WTC11 (cell line): ENCODE measurements at regions of chr3 and their contacts with region 1.

Region 1: GRCh38 chr3:111967651-111968274 is 11.1 kb upstream of the ABHD10 start:
- DNase-seq: peak; percentile 87
- ATAC-seq: peak; percentile 90
- H3K4me3 Mint-ChIP-seq: no peak overlapping the region
- H3K27ac Mint-ChIP-seq: no peak overlapping the region
- H3K4me1 Mint-ChIP-seq: peaks cover 9% of the 10 kb centered on the region
- H3K27me3 Mint-ChIP-seq: no peaks in the 10 kb centered on the region
- CTCF ChIP-seq: peak; percentile 87

Region 2: GRCh38 chr3:111691293-111691909 is 276.4 kb before region 1 on chr3:
- CTCF ChIA-PET with region 1: no interaction called
- POLR2A ChIA-PET with region 1: interaction called, 10 read pairs
- DNase-seq: no peak
- ATAC-seq: peak; percentile 82
- H3K4me3 Mint-ChIP-seq: no peak overlapping the region
- H3K27ac Mint-ChIP-seq: no peak overlapping the region
- H3K4me1 Mint-ChIP-seq: peaks cover 10% of the 10 kb centered on the region; the same call in 1 of the 2 replicates
- H3K27me3 Mint-ChIP-seq: no peaks in the 10 kb centered on the region
- CTCF ChIP-seq: no peak

Region 3: GRCh38 chr3:111717601-111718000 is 250.2 kb before region 1 on chr3:
- CTCF ChIA-PET with region 1: interaction called, 24 read pairs
- POLR2A ChIA-PET with region 1: no interaction called
- DNase-seq: peak; percentile 71
- ATAC-seq: peak; percentile 96
- H3K4me3 Mint-ChIP-seq: no peak overlapping the region
- H3K27ac Mint-ChIP-seq: no peak overlapping the region
- H3K4me1 Mint-ChIP-seq: peaks cover 8% of the 10 kb centered on the region
- H3K27me3 Mint-ChIP-seq: no peaks in the 10 kb centered on the region
- CTCF ChIP-seq: peak; percentile 93

Region 4: DNA sequence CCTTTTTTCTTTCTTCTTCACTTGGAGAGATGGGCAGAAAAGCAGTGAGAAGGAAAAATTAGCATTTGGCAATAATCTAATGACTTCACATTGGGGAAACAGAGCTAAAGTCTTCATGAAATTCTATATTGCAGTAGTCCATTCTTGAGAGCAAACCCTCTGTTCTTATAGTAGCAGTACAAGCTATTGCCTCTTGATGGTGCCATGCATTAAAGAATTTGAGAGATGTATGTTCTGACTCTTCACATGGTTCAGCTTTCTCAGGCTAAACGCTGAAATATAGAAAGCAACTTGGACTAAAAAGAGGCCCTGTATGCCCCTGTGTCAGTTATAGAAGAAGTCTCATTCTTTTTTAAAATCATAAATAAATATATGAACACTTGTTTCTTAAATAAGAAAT is 72.7 kb before region 1 on chr3:
- CTCF ChIA-PET with region 1: interaction called, 30 read pairs
- POLR2A ChIA-PET with region 1: no interaction called
- DNase-seq: no peak
- ATAC-seq: peak; percentile 66
- H3K4me3 Mint-ChIP-seq: no peak overlapping the region
- H3K27ac Mint-ChIP-seq: no peak overlapping the region
- H3K4me1 Mint-ChIP-seq: no peaks in the 10 kb centered on the region
- H3K27me3 Mint-ChIP-seq: no peaks in the 10 kb centered on the region
- CTCF ChIP-seq: no peak

Region 5: GRCh38 chr3:111956995-111957734 is 10.6 kb before region 1 on chr3:
- CTCF ChIA-PET with region 1: interaction called, 10 read pairs
- POLR2A ChIA-PET with region 1: no interaction called
- DNase-seq: no peak
- ATAC-seq: peak; percentile 80
- H3K4me3 Mint-ChIP-seq: peak overlapping the region; percentile 12
- H3K27ac Mint-ChIP-seq: no peak overlapping the region
- H3K4me1 Mint-ChIP-seq: peaks cover 63% of the 10 kb centered on the region
- H3K27me3 Mint-ChIP-seq: peaks cover 33% of the 10 kb centered on the region
- CTCF ChIP-seq: no peak

Region 6: DNA sequence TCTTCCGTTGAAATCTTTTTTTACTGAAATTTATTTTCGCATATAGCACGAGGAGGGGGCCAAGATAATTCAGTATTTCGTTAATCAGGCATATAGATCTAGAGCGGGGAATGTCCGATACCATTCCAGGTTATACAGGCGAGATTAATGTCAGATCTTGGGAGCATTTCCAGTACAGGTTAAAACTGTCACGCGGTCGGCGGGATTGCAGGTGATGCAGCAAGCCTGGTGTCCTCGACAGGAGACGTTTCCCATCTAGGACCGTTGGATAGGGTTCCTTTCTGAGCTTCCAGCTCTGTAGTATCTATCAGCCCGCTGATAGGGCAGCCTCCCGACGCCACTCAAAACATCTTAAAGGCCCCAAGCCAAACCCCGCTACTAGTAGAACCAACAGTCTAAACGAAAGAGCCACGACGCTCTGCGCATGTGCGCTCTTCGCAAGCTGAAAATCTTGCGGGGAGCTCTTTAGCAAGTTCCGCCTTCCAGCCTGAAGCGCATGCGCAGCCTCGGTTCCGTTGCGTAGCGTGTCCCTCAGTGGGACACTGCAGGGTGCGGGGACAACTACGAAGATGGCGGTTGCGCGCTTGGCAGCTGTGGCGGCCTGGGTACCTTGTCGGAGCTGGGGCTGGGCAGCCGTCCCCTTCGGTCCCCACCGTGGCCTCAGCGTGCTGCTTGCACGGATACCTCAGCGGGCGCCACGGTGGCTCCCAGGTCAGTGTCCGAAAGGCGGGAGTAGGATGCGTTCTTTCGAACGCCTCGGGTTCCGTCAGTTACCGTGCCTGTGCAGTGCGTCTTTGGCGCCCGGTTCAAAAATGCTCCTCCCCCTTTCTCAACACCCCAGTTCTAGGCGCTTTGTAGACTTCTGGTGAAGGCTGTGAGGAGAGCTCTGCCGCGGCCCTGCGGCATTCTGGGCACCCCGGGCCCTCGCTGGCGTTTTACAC is 11.0 kb after region 1 on chr3 and contains the start of gene ABHD10:
- CTCF ChIA-PET with region 1: interaction called, 24 read pairs
- POLR2A ChIA-PET with region 1: no interaction called
- DNase-seq: peak; percentile 93
- ATAC-seq: peak; percentile 96
- H3K4me3 Mint-ChIP-seq: peak within 1 kb of the TSS; percentile 83
- H3K27ac Mint-ChIP-seq: peak within 1 kb of the TSS; percentile 88
- H3K4me1 Mint-ChIP-seq: peaks cover 13% of the 10 kb centered on the region
- H3K27me3 Mint-ChIP-seq: no peaks in the 10 kb centered on the region
- CTCF ChIP-seq: no peak
- total RNA-seq, gene ABHD10: 27.6 to 32.4 TPM (median 29.2 TPM) in 3 replicates

Region 7: GRCh38 chr3:111989061-111989678 is 21.4 kb after region 1 on chr3:
- CTCF ChIA-PET with region 1: interaction called, 10 read pairs
- POLR2A ChIA-PET with region 1: no interaction called
- DNase-seq: no peak
- ATAC-seq: peak; percentile 80
- H3K4me3 Mint-ChIP-seq: no peak overlapping the region
- H3K27ac Mint-ChIP-seq: no peak overlapping the region
- H3K4me1 Mint-ChIP-seq: peaks cover 4% of the 10 kb centered on the region
- H3K27me3 Mint-ChIP-seq: no peaks in the 10 kb centered on the region
- CTCF ChIP-seq: no peak